ENCODE measurements at regions of chr2 and their contacts with region 1.

Region 1: GRCh38 chr2:192162392-192163042 is 32.2 kb downstream of the TMEFF2 start:
- DNase-seq: peak; percentile 17
- CTCF ChIP-seq: peak; percentile 87

Region 2: DNA sequence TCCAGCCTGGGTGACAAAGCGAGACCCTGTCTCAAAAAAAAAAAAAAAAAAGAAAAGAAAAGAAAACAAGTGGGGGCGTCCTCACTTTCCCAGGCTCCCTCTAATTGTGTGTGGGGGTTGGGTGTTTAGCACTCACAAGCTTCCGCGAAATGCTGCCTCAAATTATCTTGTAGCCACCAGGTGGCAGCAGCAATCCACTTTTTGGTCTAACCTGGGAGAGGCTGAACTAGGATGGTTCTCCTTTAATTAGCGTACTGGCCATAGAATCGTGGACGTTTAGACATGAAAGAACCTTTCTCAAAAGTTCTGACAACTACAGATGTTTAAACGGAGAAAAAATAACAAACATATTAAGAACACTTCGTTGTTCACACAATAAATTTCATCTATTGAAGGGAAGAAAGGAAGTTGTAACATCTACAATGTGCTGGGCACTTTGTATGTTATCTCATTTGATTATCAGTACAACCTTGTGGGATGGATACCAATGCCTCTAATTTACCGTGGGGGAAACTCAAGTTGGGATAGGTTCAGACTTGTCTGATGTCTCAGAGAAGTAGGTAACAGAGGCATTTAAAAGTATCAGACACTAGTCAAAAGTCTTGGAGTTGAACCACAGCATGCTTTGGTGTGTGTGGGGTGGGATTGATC is 607.3 kb before region 1 on chr2:
- CTCF ChIA-PET with region 1: interaction called, 101 read pairs
- POLR2A ChIA-PET with region 1: no interaction called
- DNase-seq: peak; percentile 77
- CTCF ChIP-seq: peak; percentile 78

Region 3: DNA sequence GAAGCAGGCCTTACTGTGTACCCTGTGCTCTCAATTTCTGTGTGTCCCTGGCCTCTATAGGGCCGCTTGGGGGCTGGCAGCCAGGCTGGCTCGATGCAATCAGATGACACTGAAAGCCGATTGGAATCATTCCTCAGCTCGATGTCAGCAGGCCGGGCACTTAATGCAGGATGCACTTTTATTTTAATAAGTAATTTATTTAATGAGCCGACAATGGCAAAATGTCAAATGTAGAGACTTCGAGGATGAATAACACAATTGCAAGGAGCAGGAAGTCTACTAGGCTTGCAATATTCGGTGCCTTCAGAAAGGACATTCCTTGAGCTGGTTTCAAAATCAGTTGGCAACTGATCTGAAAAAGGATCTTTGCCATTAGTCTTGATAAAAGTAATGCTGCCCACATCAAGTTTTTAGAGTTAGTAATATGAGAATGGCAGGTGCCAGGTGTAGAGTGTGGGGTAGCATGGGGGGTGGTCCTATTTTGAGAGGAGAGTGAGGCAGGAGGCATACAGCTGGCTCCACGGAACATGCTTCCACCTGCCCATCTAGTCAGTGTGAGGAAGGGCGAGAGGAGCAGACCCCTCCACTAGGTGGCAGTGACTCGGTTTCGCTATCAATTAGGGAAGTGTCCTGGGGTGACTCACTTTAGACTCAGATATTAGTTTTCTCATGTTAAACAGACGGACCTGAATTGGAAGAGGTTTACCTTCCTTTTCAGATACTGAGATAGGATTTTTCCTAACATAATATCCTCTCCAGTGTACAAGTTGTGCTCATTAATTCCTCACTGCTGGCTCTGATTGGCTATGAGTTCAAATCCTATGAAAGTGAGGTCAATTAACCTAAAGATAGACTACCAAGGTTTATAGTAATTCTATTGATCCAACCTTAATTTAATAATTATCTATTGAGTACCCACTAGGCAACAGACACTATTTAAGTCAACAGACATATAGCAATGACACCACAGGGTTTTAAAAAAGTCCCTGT is 403.7 kb before region 1 on chr2:
- CTCF ChIA-PET with region 1: interaction called, 22 read pairs
- POLR2A ChIA-PET with region 1: no interaction called
- DNase-seq: peak; percentile 83
- CTCF ChIP-seq: peak; percentile 57

Region 4: DNA sequence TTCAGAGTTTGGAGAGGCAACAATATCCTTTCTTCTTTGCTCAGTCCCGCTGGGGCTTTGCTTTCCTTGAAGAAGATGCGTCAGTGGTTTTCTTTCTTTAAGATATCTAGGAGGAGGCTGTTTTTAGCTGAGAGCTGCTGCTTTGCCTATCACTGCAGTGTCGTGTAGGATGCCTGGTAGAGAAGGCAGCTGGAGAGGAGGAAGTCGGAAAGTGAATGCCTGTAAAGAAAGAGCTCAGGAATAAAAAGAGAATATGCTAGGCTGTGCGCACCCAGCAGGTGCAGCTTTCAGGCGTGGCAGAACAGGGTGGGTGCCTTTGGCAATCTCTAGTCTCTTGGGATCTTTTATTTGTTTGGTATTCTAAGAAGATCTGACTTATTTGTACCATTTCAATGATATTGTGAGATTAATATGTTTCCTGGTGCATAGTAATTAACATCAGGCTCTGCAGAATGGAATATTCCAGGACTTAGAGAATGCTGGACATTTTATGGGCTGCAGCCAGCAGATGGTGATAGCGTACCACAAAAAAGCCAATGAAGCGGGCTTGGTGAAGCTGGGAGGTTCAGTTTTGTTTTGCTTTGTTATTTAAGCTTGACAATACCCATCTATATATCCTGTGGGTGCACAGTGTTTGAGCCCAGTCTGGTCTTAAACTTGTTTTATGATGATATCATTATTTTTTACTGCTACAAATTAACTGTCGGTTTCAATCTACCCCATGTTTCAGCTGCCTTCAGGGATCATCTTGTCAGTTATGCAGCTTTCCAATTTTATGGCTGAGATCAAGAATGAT is 350.5 kb before region 1 on chr2:
- CTCF ChIA-PET with region 1: interaction called, 145 read pairs
- POLR2A ChIA-PET with region 1: no interaction called
- DNase-seq: peak; percentile 28
- CTCF ChIP-seq: peak; percentile 68

Region 5: DNA sequence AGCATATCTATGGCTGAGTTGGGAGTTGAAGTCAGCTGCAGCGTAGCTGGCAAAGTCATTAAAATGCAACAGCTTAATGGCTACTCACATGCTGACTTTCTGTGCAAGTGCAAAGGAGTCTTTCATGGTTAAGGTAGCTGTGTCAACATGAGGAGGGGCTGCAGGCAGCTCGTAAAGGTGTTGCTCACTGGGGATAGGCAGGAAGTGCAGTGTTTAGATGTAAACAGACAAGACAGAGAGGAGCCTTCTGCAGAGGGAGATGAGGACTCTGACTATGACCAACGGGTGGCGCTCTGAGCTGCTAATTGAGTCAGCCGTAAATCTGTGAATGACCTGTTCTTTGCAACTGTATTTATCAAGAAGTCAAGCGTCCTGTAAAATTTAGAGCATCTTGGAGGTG is 293.3 kb before region 1 on chr2:
- CTCF ChIA-PET with region 1: interaction called, 46 read pairs
- POLR2A ChIA-PET with region 1: no interaction called
- DNase-seq: no peak
- CTCF ChIP-seq: no peak

Region 6: GRCh38 chr2:192029089-192029488 is 133.4 kb before region 1 on chr2:
- CTCF ChIA-PET with region 1: no interaction called
- POLR2A ChIA-PET with region 1: no interaction called
- DNase-seq: no peak
- CTCF ChIP-seq: no peak

Region 7: GRCh38 chr2:192148620-192149321 is 13.7 kb before region 1 on chr2:
- CTCF ChIA-PET with region 1: interaction called, 23 read pairs
- POLR2A ChIA-PET with region 1: no interaction called
- DNase-seq: no peak
- CTCF ChIP-seq: no peak

Region 8: GRCh38 chr2:192277494-192278109 is 115.1 kb after region 1 on chr2:
- CTCF ChIA-PET with region 1: no interaction called
- POLR2A ChIA-PET with region 1: no interaction called
- DNase-seq: no peak
- CTCF ChIP-seq: no peak

Region 9: DNA sequence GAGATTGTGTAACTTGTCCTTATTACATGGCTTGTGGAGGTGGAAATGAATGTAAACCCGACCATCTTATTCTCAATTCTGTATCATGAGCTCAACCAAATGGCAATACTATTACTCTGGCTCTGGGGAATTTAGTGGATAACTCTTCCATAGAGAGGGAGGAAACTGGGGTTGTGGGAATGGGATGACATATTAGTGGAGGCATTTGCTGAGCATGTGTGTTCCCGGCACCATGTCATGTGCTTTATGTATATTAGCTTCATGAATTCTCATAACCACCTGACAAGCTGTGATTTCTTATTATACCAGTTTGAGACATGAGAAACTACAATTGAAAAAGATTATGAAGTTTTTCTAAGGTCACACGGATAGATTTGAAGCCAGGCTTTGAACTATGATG is 145.0 kb after region 1 on chr2:
- CTCF ChIA-PET with region 1: no interaction called
- POLR2A ChIA-PET with region 1: no interaction called
- DNase-seq: no peak
- CTCF ChIP-seq: no peak

Measured in GM10248 (cell line).